ENCODE measurements at regions of chr6 and their contacts with region 1.

Region 1: GRCh38 chr6:17281100-17281494 is at the start of gene RBM24:
- DNase-seq: peak; percentile 42 to 66 (median 51)
- ATAC-seq: peak in 1 of 4 donors; percentile 2
- H3K4me3 ChIP-seq: peak within 1 kb of the TSS; percentile 65 to 87 (median 78)
- H3K27ac ChIP-seq: peak within 1 kb of the TSS; percentile 70 to 96 (median 90)
- H3K4me1 ChIP-seq: peaks cover 0 to 27% (median 3%) of the 10 kb centered on the region in 12 donors
- H3K27me3 ChIP-seq: peaks cover 0 to 42% (median 0%) of the 10 kb centered on the region in 9 donors
- CTCF ChIP-seq: peak in 5 of 12 donors; percentile 15 to 36 (median 24)
- POLR2A ChIP-seq: no peak
- total RNA-seq, gene RBM24: 107 to 263 (median 166) TPM

Region 2: GRCh38 chr6:17167327-17167979 is 113.6 kb before region 1 on chr6:
- intact Hi-C with region 1: loop called in 7 of 10 experiments (anchors 5 to 10 kb)
- DNase-seq: peak in 4 of 5 donors; percentile 54 to 76 (median 66)
- ATAC-seq: peak; percentile 84 to 97 (median 96)
- H3K4me3 ChIP-seq: no peak overlapping the region
- H3K27ac ChIP-seq: peak overlapping the region in 5 of 12 donors; percentile 6 to 59 (median 26)
- H3K4me1 ChIP-seq: peaks cover 0 to 10% (median 0%) of the 10 kb centered on the region in 12 donors
- H3K27me3 ChIP-seq: no peaks in the 10 kb centered on the region
- CTCF ChIP-seq: peak in 11 of 12 donors; percentile 32 to 63 (median 52)
- POLR2A ChIP-seq: no peak

Region 3: DNA sequence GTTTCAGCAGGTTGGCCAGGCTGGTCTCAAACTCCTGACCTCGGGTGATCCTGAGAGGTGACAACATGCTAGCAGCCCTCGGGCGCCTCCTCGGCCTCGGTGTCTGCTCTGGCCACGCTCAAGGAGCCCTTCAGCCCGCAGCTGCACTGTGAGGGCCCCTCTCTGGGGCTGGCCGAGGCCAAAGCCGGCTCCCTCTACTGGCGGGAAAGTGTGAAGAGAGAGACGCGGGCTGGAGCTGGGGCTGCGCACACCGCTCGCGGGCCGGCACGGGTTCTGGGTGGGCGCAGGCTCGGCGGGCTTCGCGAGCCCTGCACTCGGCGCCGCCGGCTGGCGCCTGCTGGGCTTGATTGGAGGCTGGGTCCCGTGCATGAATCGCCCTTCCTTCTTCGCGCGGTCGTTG is 80.7 kb before region 1 on chr6:
- intact Hi-C with region 1: loop called in 1 of 10 experiments (anchors 5 kb)
- DNase-seq: no peak
- ATAC-seq: peak in 1 of 4 donors; percentile 43
- H3K4me3 ChIP-seq: no peak overlapping the region
- H3K27ac ChIP-seq: no peak overlapping the region
- H3K4me1 ChIP-seq: peaks cover 0 to 7% (median 0%) of the 10 kb centered on the region in 12 donors
- H3K27me3 ChIP-seq: no peaks in the 10 kb centered on the region
- CTCF ChIP-seq: no peak
- POLR2A ChIP-seq: no peak

Region 4: DNA sequence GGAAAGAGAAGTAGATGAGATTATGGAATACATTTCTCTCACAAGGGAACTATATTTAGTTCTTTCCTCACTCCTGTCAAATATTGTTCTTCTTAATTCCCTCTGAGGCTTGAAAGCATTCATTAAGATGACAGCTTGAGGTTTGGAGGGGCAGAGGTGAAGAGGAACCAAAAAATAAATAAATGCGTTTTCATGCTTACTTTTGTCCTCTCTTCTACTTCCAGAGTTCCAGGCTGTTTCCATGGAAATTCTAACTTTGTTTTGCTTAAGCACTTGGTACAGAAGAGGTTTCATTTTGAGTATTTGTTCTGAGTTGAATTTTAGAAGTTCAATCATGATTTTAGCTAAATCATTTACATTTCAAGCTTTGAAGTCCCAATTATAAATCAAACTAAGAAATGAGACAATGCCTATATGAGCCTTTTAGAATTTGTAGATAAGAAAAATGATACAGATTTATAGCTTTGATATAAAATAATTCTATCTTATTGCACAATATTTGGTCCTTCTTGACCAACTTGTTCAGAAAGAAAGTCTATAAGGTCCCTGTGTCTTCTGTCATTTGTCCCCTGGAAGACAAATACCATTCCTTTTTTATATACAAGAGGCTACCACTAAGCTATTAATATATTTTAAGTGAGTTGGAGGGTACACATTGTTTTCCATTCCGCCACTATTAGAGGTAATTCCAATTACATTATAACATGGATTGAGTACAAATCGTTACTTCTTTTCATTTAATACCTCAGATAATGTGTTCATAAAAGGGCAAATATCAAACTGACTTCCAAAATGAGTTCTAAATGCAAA is 16.4 kb after region 1 on chr6:
- intact Hi-C with region 1: no loop called
- DNase-seq: no peak
- ATAC-seq: peak in 3 of 4 donors; percentile 24 to 56 (median 36)
- H3K4me3 ChIP-seq: no peak overlapping the region
- H3K27ac ChIP-seq: peak overlapping the region; percentile 4 to 69 (median 36)
- H3K4me1 ChIP-seq: peaks cover 0 to 32% (median 4%) of the 10 kb centered on the region in 12 donors
- H3K27me3 ChIP-seq: no peaks in the 10 kb centered on the region
- CTCF ChIP-seq: no peak
- POLR2A ChIP-seq: no peak

Region 5: GRCh38 chr6:17429383-17430061 is 148.4 kb after region 1 on chr6:
- intact Hi-C with region 1: loop called in 1 of 10 experiments (anchors 5 kb)
- DNase-seq: no peak
- ATAC-seq: peak; percentile 70 to 78 (median 76)
- H3K4me3 ChIP-seq: no peak overlapping the region
- H3K27ac ChIP-seq: peak overlapping the region in 9 of 12 donors; percentile 24 to 78 (median 57)
- H3K4me1 ChIP-seq: peaks cover 0 to 22% (median 0%) of the 10 kb centered on the region in 12 donors
- H3K27me3 ChIP-seq: no peaks in the 10 kb centered on the region
- CTCF ChIP-seq: no peak
- POLR2A ChIP-seq: no peak

Region 6: GRCh38 chr6:17484201-17484849 is 203.2 kb after region 1 on chr6:
- intact Hi-C with region 1: loop called in 3 of 10 experiments (anchors 5 to 10 kb)
- DNase-seq: peak in 3 of 5 donors; percentile 28 to 42 (median 41)
- ATAC-seq: peak; percentile 23 to 87 (median 56)
- H3K4me3 ChIP-seq: no peak overlapping the region
- H3K27ac ChIP-seq: peak overlapping the region in 11 of 12 donors; percentile 9 to 81 (median 64)
- H3K4me1 ChIP-seq: peaks cover 0 to 42% (median 0%) of the 10 kb centered on the region in 12 donors
- H3K27me3 ChIP-seq: no peaks in the 10 kb centered on the region
- CTCF ChIP-seq: no peak
- POLR2A ChIP-seq: no peak